HCT116 (cell line): ENCODE measurements at regions of chrX and their contacts with region 1.

Region 1: GRCh38 chrX:57595381-57595811 is 3.6 kb downstream of the ZXDB start:
- DNase-seq: no peak
- ATAC-seq: no peak
- H3K4me3 ChIP-seq: no peak overlapping the region
- H3K27ac ChIP-seq: no peak overlapping the region
- H3K4me1 ChIP-seq: peaks cover 5 to 19% of the 10 kb centered on the region in 2 experiments
- H3K27me3 ChIP-seq: no peaks in the 10 kb centered on the region
- CTCF ChIP-seq: no peak
- POLR2A ChIP-seq: no peak
- RAD21 ChIP-seq: no peak

Region 2: DNA sequence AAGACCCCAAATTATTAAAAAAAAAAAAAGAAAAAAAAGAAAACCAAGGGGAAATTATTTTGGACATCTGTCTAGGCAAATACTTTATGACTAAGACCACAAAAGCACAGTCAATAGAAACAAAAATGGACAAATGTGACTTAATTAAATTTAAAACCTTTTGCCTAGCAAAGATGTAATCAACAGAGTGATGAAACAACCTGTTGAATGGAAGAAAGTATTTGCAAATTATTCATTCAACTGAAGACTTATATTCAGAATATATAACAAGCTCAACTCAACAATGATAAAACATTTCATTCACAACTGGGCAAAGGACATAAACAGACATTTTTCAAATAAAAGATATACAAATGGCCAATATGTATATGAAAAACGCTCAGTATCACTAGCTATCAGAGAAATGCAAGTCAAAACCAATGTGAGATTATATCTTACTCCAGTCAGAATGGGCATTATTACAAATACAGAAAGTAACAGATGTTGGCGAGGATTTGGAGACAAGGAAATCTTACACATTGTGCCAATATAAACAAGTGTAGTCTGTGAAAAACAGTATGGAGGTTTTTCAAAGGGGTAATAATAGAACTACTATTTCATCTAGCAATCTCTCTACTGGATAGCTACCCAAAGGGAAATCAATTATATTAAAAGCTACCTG is 241.8 kb before region 1 on chrX:
- CTCF ChIA-PET with region 1: no interaction called
- POLR2A ChIA-PET with region 1: no interaction called
- RAD21 ChIA-PET with region 1: no interaction called
- intact Hi-C with region 1: no loop called
- DNase-seq: no peak
- ATAC-seq: no peak
- H3K4me3 ChIP-seq: no peak overlapping the region
- H3K27ac ChIP-seq: no peak overlapping the region
- H3K4me1 ChIP-seq: no peaks in the 10 kb centered on the region
- H3K27me3 ChIP-seq: no peaks in the 10 kb centered on the region
- CTCF ChIP-seq: no peak
- POLR2A ChIP-seq: no peak
- RAD21 ChIP-seq: no peak

Region 3: GRCh38 chrX:57677132-57677858 is 81.9 kb after region 1 on chrX:
- CTCF ChIA-PET with region 1: no interaction called
- POLR2A ChIA-PET with region 1: no interaction called
- RAD21 ChIA-PET with region 1: no interaction called
- intact Hi-C with region 1: no loop called
- DNase-seq: no peak
- ATAC-seq: no peak
- H3K4me3 ChIP-seq: no peak overlapping the region
- H3K27ac ChIP-seq: no peak overlapping the region
- H3K4me1 ChIP-seq: no peaks in the 10 kb centered on the region
- H3K27me3 ChIP-seq: no peaks in the 10 kb centered on the region
- CTCF ChIP-seq: no peak
- POLR2A ChIP-seq: no peak
- RAD21 ChIP-seq: no peak

Region 4: DNA sequence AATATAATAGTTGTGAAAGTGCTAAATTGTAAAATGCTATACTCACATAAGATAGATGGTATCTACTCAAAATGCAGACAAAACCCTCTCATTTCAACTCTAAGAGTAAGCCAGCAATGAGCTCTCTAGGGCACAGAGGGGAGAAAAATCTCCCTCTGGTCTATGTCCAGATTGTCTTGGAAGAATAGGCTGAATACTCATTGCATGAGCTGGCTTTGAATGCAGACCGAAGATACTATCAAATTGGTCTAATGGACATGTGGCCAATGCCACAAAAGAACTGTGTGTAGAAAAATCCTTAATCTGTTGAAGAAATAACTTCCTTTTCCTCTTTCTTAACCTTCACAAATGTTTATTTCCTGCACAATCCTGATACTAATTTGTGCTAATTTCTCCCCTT is 311.4 kb after region 1 on chrX:
- CTCF ChIA-PET with region 1: no interaction called
- POLR2A ChIA-PET with region 1: no interaction called
- RAD21 ChIA-PET with region 1: no interaction called
- intact Hi-C with region 1: loop called (anchors 5 kb)
- DNase-seq: no peak
- ATAC-seq: no peak
- H3K4me3 ChIP-seq: no peak overlapping the region
- H3K27ac ChIP-seq: no peak overlapping the region
- H3K4me1 ChIP-seq: peaks cover 2 to 8% of the 10 kb centered on the region in 2 experiments; a peak in 2 of 4 replicates
- H3K27me3 ChIP-seq: no peaks in the 10 kb centered on the region
- CTCF ChIP-seq: no peak
- POLR2A ChIP-seq: no peak
- RAD21 ChIP-seq: no peak

Region 5: GRCh38 chrX:57918750-57919436 is 323.5 kb after region 1 on chrX:
- CTCF ChIA-PET with region 1: no interaction called
- POLR2A ChIA-PET with region 1: no interaction called
- RAD21 ChIA-PET with region 1: no interaction called
- intact Hi-C with region 1: loop called (anchors 5 kb)
- DNase-seq: peak; percentile 26
- ATAC-seq: peak; percentile 78
- H3K4me3 ChIP-seq: peak overlapping the region; percentile 7 to 25; a peak in 2 of 4 replicates
- H3K27ac ChIP-seq: no peak overlapping the region
- H3K4me1 ChIP-seq: peaks cover 0 to 4% of the 10 kb centered on the region in 2 experiments; a peak in 1 of 4 replicates
- H3K27me3 ChIP-seq: no peaks in the 10 kb centered on the region
- CTCF ChIP-seq: peak; percentile 38 to 42 (median 41); a peak in 5 of 6 replicates
- POLR2A ChIP-seq: no peak
- RAD21 ChIP-seq: peak; percentile 39; the same call in 1 of the 2 replicates